ENCODE measurements at regions of chr22 and their contacts with region 1.

Region 1: GRCh38 chr22:42820066-42820763 is 36.9 kb downstream of the ARFGAP3 start:
- DNase-seq: peak; percentile 82
- ATAC-seq: peak; percentile 86
- H3K4me3 ChIP-seq: peak overlapping the region; percentile 19; the same call in 1 of the 2 replicates
- H3K27ac ChIP-seq: peak overlapping the region; percentile 32
- H3K4me1 ChIP-seq: peaks cover 23% of the 10 kb centered on the region
- H3K27me3 ChIP-seq: no peaks in the 10 kb centered on the region
- CTCF ChIP-seq: peak; percentile 78

Region 2: GRCh38 chr22:42662114-42663021 is 157.8 kb before region 1 on chr22:
- CTCF ChIA-PET with region 1: no interaction called
- POLR2A ChIA-PET with region 1: no interaction called
- intact Hi-C with region 1: loop called (anchors 1 kb)
- DNase-seq: peak; percentile 76
- ATAC-seq: peak; percentile 91
- H3K4me3 ChIP-seq: peak overlapping the region; percentile 75
- H3K27ac ChIP-seq: no peak overlapping the region
- H3K4me1 ChIP-seq: no peaks in the 10 kb centered on the region
- H3K27me3 ChIP-seq: no peaks in the 10 kb centered on the region
- CTCF ChIP-seq: peak; percentile 78

Region 3: GRCh38 chr22:42780070-42780540 is 40.1 kb before region 1 on chr22:
- CTCF ChIA-PET with region 1: no interaction called
- POLR2A ChIA-PET with region 1: no interaction called
- intact Hi-C with region 1: loop called (anchors 1 kb)
- DNase-seq: peak; percentile 82
- ATAC-seq: peak; percentile 75
- H3K4me3 ChIP-seq: no peak overlapping the region
- H3K27ac ChIP-seq: no peak overlapping the region
- H3K4me1 ChIP-seq: no peaks in the 10 kb centered on the region
- H3K27me3 ChIP-seq: no peaks in the 10 kb centered on the region
- CTCF ChIP-seq: peak; percentile 74

Region 4: DNA sequence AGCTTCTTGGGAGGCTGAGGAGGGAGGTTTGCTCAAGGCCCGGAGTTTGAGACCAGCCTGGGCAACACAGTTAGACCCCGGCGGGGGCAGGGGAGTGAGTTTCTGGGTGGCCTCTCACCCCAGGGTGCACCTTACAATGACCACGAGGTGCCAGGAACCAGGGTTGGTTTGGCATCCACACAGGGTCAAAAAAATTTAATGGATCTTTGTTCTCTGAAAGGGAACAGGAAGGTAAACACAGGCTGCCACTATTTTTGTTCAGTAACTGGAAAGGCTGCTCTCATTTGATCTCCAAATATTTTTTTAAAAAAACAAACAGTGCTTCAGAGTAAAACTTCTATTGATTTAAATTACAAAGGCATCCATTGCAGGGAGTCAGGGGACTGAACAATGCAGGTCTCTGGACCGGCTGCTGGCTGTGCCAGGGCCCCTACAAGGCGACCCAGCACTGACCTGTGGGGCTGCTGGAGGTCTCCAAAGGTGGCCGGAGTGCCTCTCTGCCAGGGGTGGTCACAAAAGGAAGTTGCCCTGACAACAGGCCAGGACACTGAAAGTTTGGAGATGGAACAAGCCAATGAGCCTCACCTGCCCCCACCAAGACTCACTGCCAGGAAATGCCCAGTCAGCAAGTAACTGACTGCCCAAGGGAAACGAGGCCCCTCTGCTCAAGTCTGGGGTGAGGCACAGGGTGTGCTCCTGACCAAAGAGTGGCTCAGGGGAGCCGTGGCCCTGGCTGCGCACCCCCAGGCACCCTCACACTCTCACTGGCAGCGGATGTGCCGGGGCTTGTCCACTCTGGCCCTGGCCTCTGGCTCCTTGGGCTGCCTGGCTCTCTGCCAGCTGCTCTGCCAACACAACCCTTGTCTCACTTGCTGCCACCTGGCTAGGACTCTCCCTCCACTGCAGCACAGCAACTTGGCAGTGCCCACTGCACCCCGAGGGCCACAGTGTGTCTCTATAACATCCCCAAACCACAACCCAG is 14.9 kb before region 1 on chr22:
- CTCF ChIA-PET with region 1: interaction called, 10 read pairs
- POLR2A ChIA-PET with region 1: no interaction called
- intact Hi-C with region 1: loop called (anchors 2 kb)
- DNase-seq: no peak
- ATAC-seq: peak; percentile 73
- H3K4me3 ChIP-seq: no peak overlapping the region
- H3K27ac ChIP-seq: peak overlapping the region; percentile 56
- H3K4me1 ChIP-seq: peaks cover 11% of the 10 kb centered on the region
- H3K27me3 ChIP-seq: no peaks in the 10 kb centered on the region
- CTCF ChIP-seq: no peak

Region 5: DNA sequence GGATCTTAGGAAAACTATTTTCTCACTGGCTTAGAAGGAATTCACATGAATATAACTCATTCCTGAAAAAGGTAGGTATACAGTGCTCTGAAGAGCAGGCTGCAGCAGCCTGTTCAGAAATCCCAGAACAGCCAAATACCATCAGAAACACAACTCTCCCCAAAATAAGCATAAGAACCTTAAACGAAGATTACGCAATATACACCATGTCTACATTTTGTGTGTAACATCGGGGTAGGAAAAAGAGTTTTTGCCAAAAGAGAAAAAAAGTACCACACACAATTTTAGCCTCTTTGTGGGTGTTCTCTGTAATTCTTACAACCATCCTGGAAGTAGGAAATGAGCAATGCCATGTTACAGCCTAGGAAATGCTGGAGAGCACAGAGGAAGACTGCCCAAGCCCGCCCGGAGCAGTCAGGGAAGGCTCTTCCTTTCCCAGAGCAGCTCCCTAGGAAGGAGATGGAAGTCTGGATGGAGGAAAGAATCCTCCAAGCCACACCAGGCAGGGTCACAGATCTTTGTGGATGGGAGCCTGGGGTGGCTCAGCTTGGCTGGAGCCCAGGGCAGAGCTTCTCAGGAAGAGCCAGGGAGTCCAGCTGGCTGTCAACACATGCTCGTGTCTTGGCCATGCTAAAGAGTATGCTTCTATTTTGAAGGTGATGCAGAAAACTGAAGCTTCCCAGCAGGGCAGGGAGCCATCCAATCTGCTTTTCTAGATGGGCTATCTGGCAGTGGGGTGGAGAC is 86.6 kb after region 1 on chr22:
- CTCF ChIA-PET with region 1: no interaction called
- POLR2A ChIA-PET with region 1: no interaction called
- intact Hi-C with region 1: no loop called
- DNase-seq: no peak
- ATAC-seq: no peak
- H3K4me3 ChIP-seq: no peak overlapping the region
- H3K27ac ChIP-seq: no peak overlapping the region
- H3K4me1 ChIP-seq: no peaks in the 10 kb centered on the region
- H3K27me3 ChIP-seq: no peaks in the 10 kb centered on the region
- CTCF ChIP-seq: no peak

Region 6: GRCh38 chr22:42959576-42960509 is 139.6 kb after region 1 on chr22:
- CTCF ChIA-PET with region 1: no interaction called
- POLR2A ChIA-PET with region 1: no interaction called
- intact Hi-C with region 1: no loop called
- DNase-seq: no peak
- ATAC-seq: no peak
- H3K4me3 ChIP-seq: no peak overlapping the region
- H3K27ac ChIP-seq: no peak overlapping the region
- H3K4me1 ChIP-seq: peaks cover 17% of the 10 kb centered on the region
- H3K27me3 ChIP-seq: no peaks in the 10 kb centered on the region
- CTCF ChIP-seq: no peak

Measured in PC-3 (cell line).